WTC11 (cell line): ENCODE measurements at regions of chr20 and their contacts with region 1.

Region 1: GRCh38 chr20:19583532-19584175 is 174.4 kb upstream of the RIN2 start:
- DNase-seq: peak; percentile 93
- ATAC-seq: peak; percentile 96
- H3K4me3 Mint-ChIP-seq: no peak overlapping the region
- H3K27ac Mint-ChIP-seq: no peak overlapping the region
- H3K4me1 Mint-ChIP-seq: peaks cover 13% of the 10 kb centered on the region
- H3K27me3 Mint-ChIP-seq: no peaks in the 10 kb centered on the region; the same call in 1 of the 2 replicates
- CTCF ChIP-seq: peak; percentile 86

Region 2: GRCh38 chr20:19074828-19075516 is 508.7 kb before region 1 on chr20:
- CTCF ChIA-PET with region 1: interaction called, 41 read pairs
- POLR2A ChIA-PET with region 1: no interaction called
- DNase-seq: no peak
- ATAC-seq: no peak
- H3K4me3 Mint-ChIP-seq: no peak overlapping the region
- H3K27ac Mint-ChIP-seq: no peak overlapping the region
- H3K4me1 Mint-ChIP-seq: peaks cover 21% of the 10 kb centered on the region
- H3K27me3 Mint-ChIP-seq: no peaks in the 10 kb centered on the region; the same call in 1 of the 2 replicates
- CTCF ChIP-seq: no peak

Region 3: GRCh38 chr20:19205977-19206396 is 377.7 kb before region 1 on chr20:
- CTCF ChIA-PET with region 1: interaction called, 92 read pairs
- POLR2A ChIA-PET with region 1: no interaction called
- DNase-seq: peak; percentile 93
- ATAC-seq: peak; percentile 60
- H3K4me3 Mint-ChIP-seq: no peak overlapping the region
- H3K27ac Mint-ChIP-seq: no peak overlapping the region
- H3K4me1 Mint-ChIP-seq: peaks cover 55% of the 10 kb centered on the region
- H3K27me3 Mint-ChIP-seq: no peaks in the 10 kb centered on the region
- CTCF ChIP-seq: peak; percentile 93

Region 4: GRCh38 chr20:19423097-19423899 is 160.4 kb before region 1 on chr20:
- CTCF ChIA-PET with region 1: interaction called, 11 read pairs
- POLR2A ChIA-PET with region 1: no interaction called
- DNase-seq: no peak
- ATAC-seq: peak; percentile 50
- H3K4me3 Mint-ChIP-seq: no peak overlapping the region
- H3K27ac Mint-ChIP-seq: peak overlapping the region; percentile 21
- H3K4me1 Mint-ChIP-seq: peaks cover 37% of the 10 kb centered on the region
- H3K27me3 Mint-ChIP-seq: no peaks in the 10 kb centered on the region; the same call in 1 of the 2 replicates
- CTCF ChIP-seq: no peak

Region 5: GRCh38 chr20:19571996-19572395 is 11.7 kb before region 1 on chr20:
- CTCF ChIA-PET with region 1: interaction called, 15 read pairs
- POLR2A ChIA-PET with region 1: no interaction called
- DNase-seq: no peak
- ATAC-seq: no peak
- H3K4me3 Mint-ChIP-seq: no peak overlapping the region
- H3K27ac Mint-ChIP-seq: peak overlapping the region; percentile 5; the same call in 1 of the 2 replicates
- H3K4me1 Mint-ChIP-seq: peaks cover 16% of the 10 kb centered on the region
- H3K27me3 Mint-ChIP-seq: no peaks in the 10 kb centered on the region
- CTCF ChIP-seq: no peak

Region 6: GRCh38 chr20:19621072-19621471 is 37.4 kb after region 1 on chr20:
- CTCF ChIA-PET with region 1: interaction called, 14 read pairs
- POLR2A ChIA-PET with region 1: interaction called, 3 read pairs
- DNase-seq: no peak
- ATAC-seq: no peak
- H3K4me3 Mint-ChIP-seq: no peak overlapping the region
- H3K27ac Mint-ChIP-seq: no peak overlapping the region
- H3K4me1 Mint-ChIP-seq: peaks cover 39% of the 10 kb centered on the region
- H3K27me3 Mint-ChIP-seq: peaks cover 4% of the 10 kb centered on the region; the same call in 1 of the 2 replicates
- CTCF ChIP-seq: no peak

Region 7: GRCh38 chr20:19661717-19662636 is 78.3 kb after region 1 on chr20:
- CTCF ChIA-PET with region 1: interaction called, 14 read pairs
- POLR2A ChIA-PET with region 1: no interaction called
- DNase-seq: peak; percentile 68
- ATAC-seq: peak; percentile 80
- H3K4me3 Mint-ChIP-seq: no peak overlapping the region
- H3K27ac Mint-ChIP-seq: no peak overlapping the region
- H3K4me1 Mint-ChIP-seq: peaks cover 20% of the 10 kb centered on the region
- H3K27me3 Mint-ChIP-seq: no peaks in the 10 kb centered on the region
- CTCF ChIP-seq: peak; percentile 95